Endothelial cell of umbilical vein (primary cell): ENCODE measurements at regions of chr9 and their contacts with region 1.

Region 1: GRCh38 chr9:111298731-111299598 is 31.1 kb downstream of the OR2K2 start:
- DNase-seq: peak; percentile 70
- H3K4me3 ChIP-seq: no peak overlapping the region
- H3K27ac ChIP-seq: no peak overlapping the region
- H3K4me1 ChIP-seq: no peaks in the 10 kb centered on the region
- H3K27me3 ChIP-seq: no peaks in the 10 kb centered on the region
- CTCF ChIP-seq: peak; percentile 42 to 46
- POLR2A ChIP-seq: no peak

Region 2: DNA sequence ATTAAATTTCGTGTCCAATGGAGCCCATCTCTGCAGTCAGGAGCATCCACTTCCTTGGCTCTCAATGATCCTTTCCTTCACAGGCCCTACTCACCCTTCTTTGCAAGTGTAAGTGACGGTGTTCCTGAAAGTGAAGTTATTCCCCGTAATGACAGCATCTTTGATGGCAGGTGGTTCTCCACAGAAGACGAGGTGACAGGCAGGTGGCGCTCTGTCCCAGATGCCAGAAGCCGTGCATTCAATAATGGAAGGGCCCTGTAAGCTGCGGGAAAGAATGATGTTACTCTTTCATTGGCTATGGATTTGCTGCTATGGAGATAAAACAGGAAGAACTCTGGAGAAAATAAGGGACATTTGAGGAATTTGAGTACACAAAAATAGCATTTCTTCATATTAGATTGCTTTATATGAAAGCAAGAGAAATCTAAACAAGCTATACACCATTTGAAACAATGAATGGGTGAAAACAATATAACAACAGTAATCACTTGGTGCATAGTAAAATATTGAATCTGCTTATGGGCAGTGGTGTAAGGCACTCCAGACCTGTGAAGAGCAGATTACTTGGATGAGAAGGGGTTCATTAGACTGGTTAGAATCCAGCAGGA is 871.4 kb before region 1 on chr9:
- CTCF ChIA-PET with region 1: interaction called, 4 read pairs
- POLR2A ChIA-PET with region 1: no interaction called
- dilution Hi-C with region 1: no loop called
- intact Hi-C with region 1: loop called (anchors 5 kb)
- DNase-seq: peak; percentile 46
- H3K4me3 ChIP-seq: no peak overlapping the region
- H3K27ac ChIP-seq: no peak overlapping the region
- H3K4me1 ChIP-seq: no peaks in the 10 kb centered on the region
- H3K27me3 ChIP-seq: no peaks in the 10 kb centered on the region
- CTCF ChIP-seq: peak; percentile 60 to 75
- POLR2A ChIP-seq: no peak

Region 3: DNA sequence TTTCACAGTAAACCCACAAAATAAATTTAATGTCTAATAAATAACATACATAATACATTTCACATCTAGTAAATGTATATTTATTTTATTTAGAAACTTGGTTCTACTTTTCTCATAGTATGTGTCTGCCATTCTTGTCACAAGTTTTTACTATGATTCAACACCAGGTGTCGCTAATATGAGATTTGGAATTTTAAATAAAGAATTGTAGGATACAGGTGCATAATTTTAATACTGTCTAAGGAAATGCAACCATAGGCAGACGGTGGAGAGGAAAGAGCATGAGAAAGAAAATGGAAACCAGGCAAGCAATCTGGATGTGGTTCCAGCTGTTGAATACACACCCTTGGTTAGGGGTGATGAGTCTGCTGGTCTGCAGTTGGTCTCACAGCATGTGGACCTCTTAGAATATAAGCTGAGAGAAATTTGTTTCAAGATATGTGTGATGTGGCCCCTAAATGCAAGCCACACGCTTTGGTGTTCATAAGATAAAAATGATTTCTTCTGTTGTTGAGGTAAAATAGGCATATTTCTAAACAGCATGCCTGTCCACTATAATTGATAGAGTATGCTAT is 846.7 kb before region 1 on chr9:
- CTCF ChIA-PET with region 1: no interaction called
- POLR2A ChIA-PET with region 1: no interaction called
- dilution Hi-C with region 1: no loop called
- intact Hi-C with region 1: loop called (anchors 5 kb)
- DNase-seq: peak; percentile 20
- H3K4me3 ChIP-seq: no peak overlapping the region
- H3K27ac ChIP-seq: no peak overlapping the region
- H3K4me1 ChIP-seq: no peaks in the 10 kb centered on the region
- H3K27me3 ChIP-seq: no peaks in the 10 kb centered on the region
- CTCF ChIP-seq: peak in 1 of 2 donors; percentile 10
- POLR2A ChIP-seq: no peak

Region 4: GRCh38 chr9:110638381-110638954 is 660.5 kb before region 1 on chr9:
- CTCF ChIA-PET with region 1: interaction called, 108 read pairs
- POLR2A ChIA-PET with region 1: no interaction called
- dilution Hi-C with region 1: no loop called
- intact Hi-C with region 1: loop called (anchors 1 kb)
- DNase-seq: peak; percentile 50
- H3K4me3 ChIP-seq: no peak overlapping the region
- H3K27ac ChIP-seq: no peak overlapping the region
- H3K4me1 ChIP-seq: no peaks in the 10 kb centered on the region
- H3K27me3 ChIP-seq: no peaks in the 10 kb centered on the region
- CTCF ChIP-seq: peak; percentile 9 to 17
- POLR2A ChIP-seq: no peak

Region 5: DNA sequence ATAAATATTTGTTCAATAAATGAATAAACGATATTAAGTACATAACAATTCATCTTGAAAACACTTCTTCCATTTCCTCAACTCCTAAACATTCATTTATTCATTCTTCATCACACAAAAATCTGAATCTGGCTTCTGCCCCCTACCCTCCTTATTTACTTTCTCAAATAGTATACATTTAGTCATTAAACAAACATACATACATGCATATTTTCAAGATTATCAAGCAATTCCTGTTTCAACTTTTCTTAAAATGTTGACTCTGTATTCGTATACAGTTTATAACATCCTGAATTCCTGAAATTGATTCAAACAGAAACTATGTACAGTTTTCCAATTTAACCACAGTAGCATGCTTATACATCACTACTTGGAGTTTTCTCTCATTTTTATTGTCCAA is 501.4 kb before region 1 on chr9:
- CTCF ChIA-PET with region 1: no interaction called
- POLR2A ChIA-PET with region 1: no interaction called
- dilution Hi-C with region 1: no loop called
- intact Hi-C with region 1: no loop called
- DNase-seq: peak; percentile 40
- H3K4me3 ChIP-seq: no peak overlapping the region
- H3K27ac ChIP-seq: no peak overlapping the region
- H3K4me1 ChIP-seq: peaks cover 12% of the 10 kb centered on the region
- H3K27me3 ChIP-seq: no peaks in the 10 kb centered on the region
- CTCF ChIP-seq: no peak
- POLR2A ChIP-seq: no peak

Region 6: GRCh38 chr9:110835404-110835803 is 463.6 kb before region 1 on chr9:
- CTCF ChIA-PET with region 1: no interaction called
- POLR2A ChIA-PET with region 1: no interaction called
- dilution Hi-C with region 1: no loop called
- intact Hi-C with region 1: loop called (anchors 10 kb)
- DNase-seq: no peak
- H3K4me3 ChIP-seq: no peak overlapping the region
- H3K27ac ChIP-seq: no peak overlapping the region
- H3K4me1 ChIP-seq: no peaks in the 10 kb centered on the region
- H3K27me3 ChIP-seq: no peaks in the 10 kb centered on the region
- CTCF ChIP-seq: no peak
- POLR2A ChIP-seq: no peak

Region 7: DNA sequence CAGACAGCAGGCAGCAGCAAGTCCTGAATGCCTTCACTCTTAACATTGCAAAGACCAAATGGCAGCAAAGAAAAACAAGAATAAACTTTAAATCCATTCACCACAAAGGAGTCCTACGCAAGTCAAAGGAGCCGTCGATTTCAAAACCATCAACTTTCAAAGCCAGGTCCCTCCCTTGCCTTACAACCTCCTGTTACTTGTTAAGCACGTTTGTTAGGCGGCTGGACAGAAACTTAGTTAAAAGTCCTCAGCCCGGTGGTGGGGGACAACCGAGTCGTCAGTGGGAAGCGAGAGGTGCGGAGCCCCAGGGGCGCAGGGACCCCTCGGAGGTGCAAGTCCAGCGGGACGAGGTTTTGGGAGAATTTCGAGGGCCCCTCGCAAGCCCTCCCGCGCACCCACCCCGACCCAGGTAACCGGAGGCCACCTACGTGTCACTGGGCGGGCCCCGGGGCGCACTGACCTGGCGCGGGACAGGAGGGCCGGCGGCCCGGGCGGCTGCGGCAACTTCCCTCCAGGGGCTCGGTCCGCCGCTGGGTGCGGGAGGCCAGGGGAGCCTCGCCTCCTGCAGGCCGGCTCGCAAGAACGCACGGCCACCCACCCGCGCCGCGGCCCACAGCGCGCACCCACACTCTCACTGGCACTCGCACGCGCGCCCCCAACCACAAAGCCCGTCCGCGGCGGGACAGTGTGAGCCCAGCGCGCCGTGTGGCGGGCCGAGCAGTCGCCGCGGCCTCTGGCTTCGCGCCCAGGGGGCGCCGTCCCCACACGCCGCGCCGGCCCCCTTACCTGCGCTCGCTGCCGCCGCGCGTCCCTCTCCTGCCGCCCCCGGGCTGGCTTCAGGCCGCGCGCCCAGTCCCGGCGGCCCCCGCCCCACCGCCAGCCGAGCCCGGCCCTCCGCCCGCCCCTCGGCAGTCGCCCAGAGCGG is 261.3 kb before region 1 on chr9:
- CTCF ChIA-PET with region 1: interaction called, 4 read pairs
- POLR2A ChIA-PET with region 1: no interaction called
- dilution Hi-C with region 1: no loop called
- intact Hi-C with region 1: loop called (anchors 5 kb)
- DNase-seq: no peak
- H3K4me3 ChIP-seq: peak overlapping the region; percentile 10 to 61 (median 46)
- H3K27ac ChIP-seq: no peak overlapping the region
- H3K4me1 ChIP-seq: peaks cover 21% of the 10 kb centered on the region
- H3K27me3 ChIP-seq: peaks cover 23 to 28% of the 10 kb centered on the region in 2 experiments
- CTCF ChIP-seq: no peak
- POLR2A ChIP-seq: no peak

Region 8: DNA sequence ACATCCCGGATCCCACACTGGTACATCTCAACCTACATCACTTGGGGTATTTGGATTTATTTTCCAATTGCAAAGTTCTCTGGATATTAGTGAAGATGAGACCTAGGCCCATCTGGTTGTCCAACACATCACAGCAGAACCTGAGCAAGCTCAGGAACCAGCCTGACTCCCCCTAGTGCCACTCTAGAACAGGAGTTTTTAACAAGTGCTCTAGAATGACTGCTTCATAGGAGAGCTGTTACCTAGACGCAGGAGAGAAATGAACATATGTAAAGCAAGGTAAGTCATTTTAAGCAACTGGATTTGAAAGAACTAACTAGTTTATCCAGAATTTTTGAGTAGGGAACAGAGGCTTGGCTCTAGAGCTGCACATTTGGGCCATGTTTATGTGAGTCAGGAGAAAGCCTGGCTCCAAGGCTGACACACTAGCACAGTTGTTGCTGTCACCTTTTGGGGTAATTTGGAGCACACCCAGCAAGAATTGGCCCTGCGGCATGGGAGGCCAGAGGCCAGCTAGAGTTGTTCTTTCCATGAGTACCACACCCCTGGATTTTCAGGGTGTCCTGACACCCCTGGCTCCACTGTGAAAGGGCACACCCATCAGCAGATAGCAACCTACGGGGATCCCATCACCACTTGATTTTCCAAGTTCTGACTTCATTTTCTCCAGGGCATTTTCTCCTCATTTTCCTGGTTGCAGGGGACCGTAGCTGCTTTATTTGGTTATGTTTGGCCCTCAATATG is 149.8 kb before region 1 on chr9:
- CTCF ChIA-PET with region 1: interaction called, 3 read pairs
- POLR2A ChIA-PET with region 1: no interaction called
- dilution Hi-C with region 1: no loop called
- intact Hi-C with region 1: loop called (anchors 5 kb)
- DNase-seq: no peak
- H3K4me3 ChIP-seq: no peak overlapping the region
- H3K27ac ChIP-seq: no peak overlapping the region
- H3K4me1 ChIP-seq: no peaks in the 10 kb centered on the region
- H3K27me3 ChIP-seq: no peaks in the 10 kb centered on the region
- CTCF ChIP-seq: no peak
- POLR2A ChIP-seq: no peak

Region 9: DNA sequence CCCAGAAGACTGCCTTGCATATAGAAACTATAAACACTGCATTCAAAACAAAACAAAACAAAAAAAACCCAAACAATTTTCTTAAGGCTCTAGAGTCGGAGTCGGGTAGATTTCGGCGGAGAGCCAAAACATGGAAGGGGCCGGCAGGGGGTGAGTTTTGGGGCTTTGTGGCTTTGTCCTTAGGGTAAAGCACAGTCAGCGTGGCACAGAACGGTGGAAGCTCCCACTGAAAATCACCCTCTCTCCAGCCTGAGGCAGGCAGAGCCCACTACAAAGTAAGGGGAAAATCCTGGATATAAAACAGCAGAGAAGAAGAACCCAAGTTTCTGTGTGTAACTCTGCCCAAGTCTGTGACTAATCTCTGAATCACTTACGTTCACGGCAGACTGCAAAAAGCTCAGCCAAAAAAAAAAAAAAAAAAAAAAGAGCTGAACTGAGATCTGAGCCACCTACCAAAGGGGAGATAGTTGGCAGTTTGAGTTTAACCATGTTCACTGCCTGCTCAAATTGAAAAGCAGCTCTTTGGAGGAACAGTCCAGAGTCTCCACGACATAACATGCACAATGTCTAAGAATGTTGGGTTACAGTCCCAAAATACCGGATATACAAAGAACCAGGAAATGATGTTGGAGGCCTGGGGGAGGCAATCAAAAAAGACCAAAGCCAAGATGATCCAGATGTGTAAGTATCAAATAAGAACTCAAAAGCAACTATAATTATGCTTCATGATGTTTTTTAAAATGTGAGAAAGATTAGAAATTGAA is 57.7 kb after region 1 on chr9:
- CTCF ChIA-PET with region 1: no interaction called
- POLR2A ChIA-PET with region 1: no interaction called
- dilution Hi-C with region 1: no loop called
- intact Hi-C with region 1: no loop called
- DNase-seq: peak; percentile 53
- H3K4me3 ChIP-seq: no peak overlapping the region
- H3K27ac ChIP-seq: peak overlapping the region; percentile 77
- H3K4me1 ChIP-seq: peaks cover 13% of the 10 kb centered on the region
- H3K27me3 ChIP-seq: no peaks in the 10 kb centered on the region
- CTCF ChIP-seq: no peak
- POLR2A ChIP-seq: no peak

Region 10: GRCh38 chr9:111399772-111400563 is 101.0 kb after region 1 on chr9:
- CTCF ChIA-PET with region 1: no interaction called
- POLR2A ChIA-PET with region 1: no interaction called
- dilution Hi-C with region 1: no loop called
- intact Hi-C with region 1: no loop called
- DNase-seq: peak; percentile 14
- H3K4me3 ChIP-seq: no peak overlapping the region
- H3K27ac ChIP-seq: no peak overlapping the region
- H3K4me1 ChIP-seq: no peaks in the 10 kb centered on the region
- H3K27me3 ChIP-seq: no peaks in the 10 kb centered on the region
- CTCF ChIP-seq: peak; percentile 50 to 53
- POLR2A ChIP-seq: no peak